ENCODE measurements at regions of chr2 and their contacts with region 1.

Region 1: DNA sequence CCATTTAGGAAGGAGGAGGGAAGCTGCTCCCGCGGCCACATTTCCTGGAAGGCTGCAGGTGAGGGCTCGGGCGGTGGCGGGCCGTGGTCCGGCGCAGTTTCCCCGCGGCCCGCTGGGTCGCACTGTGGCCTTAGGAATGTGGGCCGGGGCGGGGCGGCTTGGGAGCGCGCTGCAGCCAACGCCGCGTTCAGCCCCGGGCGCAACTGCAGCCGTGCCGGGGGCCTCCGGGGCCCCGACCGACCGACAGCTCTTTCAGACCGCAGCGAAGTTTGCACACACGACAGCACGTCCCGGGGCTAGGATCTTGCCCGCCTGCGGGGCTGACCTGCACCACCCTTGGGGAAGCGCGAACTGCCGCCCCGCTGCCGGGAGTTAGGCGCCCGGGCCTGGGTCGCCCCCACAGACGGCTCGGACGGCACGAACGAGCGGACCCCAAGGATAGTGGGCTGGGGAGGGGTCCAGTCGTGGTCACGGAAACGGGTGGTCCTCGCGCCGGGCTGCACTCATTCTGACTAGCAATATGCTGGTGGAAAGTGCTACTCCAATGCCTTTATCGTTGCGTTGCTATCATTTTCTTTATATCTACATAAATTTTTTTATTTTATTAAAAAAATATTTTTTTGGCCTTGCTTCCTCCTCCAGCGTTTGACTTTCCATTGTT is 69.9 kb upstream of the DLX2 start:
- DNase-seq: peak; percentile 86
- ATAC-seq: peak; percentile 100
- H3K4me3 ChIP-seq: peak overlapping the region; percentile 57
- H3K27ac ChIP-seq: no peak overlapping the region
- H3K4me1 ChIP-seq: peaks cover 5% of the 10 kb centered on the region
- H3K27me3 ChIP-seq: peaks cover 6% of the 10 kb centered on the region
- CTCF ChIP-seq: peak; percentile 81

Region 2: GRCh38 chr2:172113617-172114016 is 59.0 kb before region 1 on chr2:
- intact Hi-C with region 1: no loop called
- DNase-seq: no peak
- ATAC-seq: no peak
- H3K4me3 ChIP-seq: no peak overlapping the region
- H3K27ac ChIP-seq: no peak overlapping the region
- H3K4me1 ChIP-seq: no peaks in the 10 kb centered on the region
- H3K27me3 ChIP-seq: peaks cover 43% of the 10 kb centered on the region
- CTCF ChIP-seq: peak; percentile 23

Region 3: GRCh38 chr2:172339371-172340010 is 166.8 kb after region 1 on chr2:
- intact Hi-C with region 1: no loop called
- DNase-seq: no peak
- ATAC-seq: peak; percentile 34
- H3K4me3 ChIP-seq: no peak overlapping the region
- H3K27ac ChIP-seq: peak overlapping the region; percentile 55
- H3K4me1 ChIP-seq: peaks cover 15% of the 10 kb centered on the region
- H3K27me3 ChIP-seq: no peaks in the 10 kb centered on the region
- CTCF ChIP-seq: no peak

Region 4: DNA sequence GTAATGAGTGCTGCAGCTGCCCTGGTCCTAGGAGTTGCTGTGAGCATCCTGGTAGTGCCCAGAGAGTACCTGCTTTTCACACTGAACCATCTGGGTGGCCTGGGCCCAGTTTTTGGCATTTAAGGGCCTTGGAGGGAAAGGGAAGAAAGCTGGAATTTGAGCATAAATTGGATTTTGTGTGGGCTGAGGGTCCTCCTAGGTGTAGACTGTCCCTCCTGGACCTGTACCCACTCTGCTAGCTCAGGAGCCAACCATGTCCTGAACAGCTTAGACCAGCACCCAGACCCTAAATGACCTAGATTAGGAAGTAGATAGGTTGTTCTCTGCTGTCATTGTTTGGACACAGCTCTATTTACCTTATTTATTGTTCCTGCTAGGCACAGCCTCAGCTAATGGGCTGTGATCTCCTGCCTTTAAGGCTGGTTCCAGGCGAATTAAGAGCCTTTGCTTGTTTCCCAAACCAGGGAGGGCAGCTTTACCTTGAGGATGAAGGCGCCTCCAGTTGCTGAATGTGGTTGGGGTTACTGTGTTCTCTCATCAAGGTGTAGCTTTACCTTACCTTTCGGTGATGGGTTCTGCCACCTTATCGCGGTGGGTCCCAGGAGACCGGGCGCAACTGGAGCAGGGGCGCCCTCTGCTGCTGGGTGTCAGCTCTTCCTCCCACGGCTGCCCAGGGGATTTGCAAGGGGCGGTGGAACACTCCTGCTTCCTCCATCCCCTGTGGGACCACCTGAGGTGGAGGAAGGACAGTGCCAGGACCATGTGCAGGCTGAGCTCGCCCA is 289.1 kb after region 1 on chr2:
- intact Hi-C with region 1: loop called (anchors 5 kb)
- DNase-seq: peak; percentile 86
- ATAC-seq: peak; percentile 88
- H3K4me3 ChIP-seq: no peak overlapping the region
- H3K27ac ChIP-seq: no peak overlapping the region
- H3K4me1 ChIP-seq: peaks cover 20% of the 10 kb centered on the region
- H3K27me3 ChIP-seq: no peaks in the 10 kb centered on the region
- CTCF ChIP-seq: peak; percentile 81